CD4-positive, alpha-beta memory T cell (primary cell): ENCODE measurements at regions of chr15 and their contacts with region 1.

Region 1: GRCh38 chr15:45587095-45587860 is at the start of gene BLOC1S6:
- DNase-seq: peak; percentile 87 to 91 (median 90)
- H3K4me3 ChIP-seq: peak within 1 kb of the TSS; percentile 89 to 99
- H3K4me3 Mint-ChIP-seq: peak within 1 kb of the TSS; percentile 96 to 100 (median 100)
- H3K27ac ChIP-seq: peak within 1 kb of the TSS; percentile 95
- H3K27ac Mint-ChIP-seq: peak within 1 kb of the TSS; percentile 100
- H3K4me1 ChIP-seq: peaks cover 44% of the 10 kb centered on the region
- H3K4me1 Mint-ChIP-seq: peaks cover 20 to 48% (median 37%) of the 10 kb centered on the region in 4 donors
- H3K27me3 ChIP-seq: no peaks in the 10 kb centered on the region
- H3K27me3 Mint-ChIP-seq: no peaks in the 10 kb centered on the region
- total RNA-seq, gene BLOC1S6: 43.0 to 43.9 TPM

Region 2: GRCh38 chr15:45522328-45523160 is 64.7 kb before region 1 on chr15 and contains the start of gene SLC30A4:
- CTCF ChIA-PET with region 1: interaction called, 3 read pairs
- POLR2A ChIA-PET with region 1: interaction called, 11 read pairs
- intact Hi-C with region 1: loop called (anchors 1 kb)
- DNase-seq: peak; percentile 68 to 75 (median 69)
- H3K4me3 ChIP-seq: peak within 1 kb of the TSS; percentile 62 to 82
- H3K4me3 Mint-ChIP-seq: peak within 1 kb of the TSS; percentile 87 to 96 (median 94)
- H3K27ac ChIP-seq: peak within 1 kb of the TSS; percentile 54
- H3K27ac Mint-ChIP-seq: peak within 1 kb of the TSS; percentile 36 to 93 (median 88)
- H3K4me1 ChIP-seq: peaks cover 15% of the 10 kb centered on the region
- H3K4me1 Mint-ChIP-seq: peaks cover 18 to 28% (median 21%) of the 10 kb centered on the region in 4 donors
- H3K27me3 ChIP-seq: no peaks in the 10 kb centered on the region
- H3K27me3 Mint-ChIP-seq: no peaks in the 10 kb centered on the region
- total RNA-seq, gene SLC30A4: 3.6 to 3.8 TPM

Region 3: DNA sequence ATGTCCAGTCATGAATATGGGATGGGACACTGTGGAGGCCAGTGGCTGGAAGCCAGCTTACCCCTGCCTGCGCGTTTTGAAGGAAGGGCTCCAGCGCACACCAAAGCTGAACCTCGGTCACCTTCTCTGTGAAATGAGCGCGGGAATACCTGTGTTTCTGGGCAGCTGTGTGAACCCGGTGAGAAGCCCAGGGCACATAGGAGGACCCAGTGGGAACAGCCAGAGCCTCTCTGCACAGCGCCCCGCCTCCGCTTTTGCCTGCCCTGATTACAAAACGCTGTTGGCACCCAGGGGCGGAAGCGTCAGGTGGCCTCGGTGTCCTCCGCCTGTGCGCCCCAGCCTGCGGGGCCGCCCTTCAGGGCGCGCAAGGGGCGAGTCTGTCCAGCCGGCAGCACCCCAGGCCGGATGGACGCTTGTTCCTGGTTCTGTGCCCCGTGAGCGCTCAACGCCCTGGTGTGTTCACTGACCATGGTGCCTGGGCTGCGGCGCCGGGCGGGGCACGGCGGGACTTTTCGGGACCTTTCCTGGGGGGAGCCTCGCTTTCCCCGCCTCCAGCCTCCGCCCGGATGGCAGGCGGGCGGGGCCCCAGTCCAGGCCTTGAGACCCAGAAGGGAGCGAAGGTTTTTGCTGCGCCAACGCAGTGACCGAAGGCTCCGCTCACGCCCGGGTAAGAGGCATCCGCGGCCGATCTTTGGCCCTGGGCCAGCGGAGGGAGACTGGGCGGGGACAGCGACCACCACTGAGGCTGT is 47.3 kb after region 1 on chr15 and contains the start of gene SQOR:
- CTCF ChIA-PET with region 1: interaction called, 6 read pairs
- POLR2A ChIA-PET with region 1: interaction called, 39 read pairs
- intact Hi-C with region 1: loop called (anchors 1 kb)
- DNase-seq: peak; percentile 63 to 71 (median 67)
- H3K4me3 ChIP-seq: peak within 1 kb of the TSS; percentile 76 to 90
- H3K4me3 Mint-ChIP-seq: peak within 1 kb of the TSS; percentile 88 to 99 (median 98)
- H3K27ac ChIP-seq: peak within 1 kb of the TSS; percentile 67
- H3K27ac Mint-ChIP-seq: peak within 1 kb of the TSS; percentile 90 to 96 (median 95)
- H3K4me1 ChIP-seq: peaks cover 45% of the 10 kb centered on the region
- H3K4me1 Mint-ChIP-seq: peaks cover 26 to 53% (median 41%) of the 10 kb centered on the region in 4 donors
- H3K27me3 ChIP-seq: no peaks in the 10 kb centered on the region
- H3K27me3 Mint-ChIP-seq: no peaks in the 10 kb centered on the region
- total RNA-seq, gene SQOR: 47.9 to 51.0 TPM

Region 4: GRCh38 chr15:45690581-45691260 is 103.4 kb after region 1 on chr15:
- CTCF ChIA-PET with region 1: no interaction called
- POLR2A ChIA-PET with region 1: no interaction called
- intact Hi-C with region 1: no loop called
- DNase-seq: no peak
- H3K4me3 ChIP-seq: no peak overlapping the region
- H3K4me3 Mint-ChIP-seq: no peak overlapping the region
- H3K27ac ChIP-seq: no peak overlapping the region
- H3K27ac Mint-ChIP-seq: no peak overlapping the region
- H3K4me1 ChIP-seq: no peaks in the 10 kb centered on the region
- H3K4me1 Mint-ChIP-seq: peaks cover 0 to 2% (median 0%) of the 10 kb centered on the region in 4 donors
- H3K27me3 ChIP-seq: no peaks in the 10 kb centered on the region
- H3K27me3 Mint-ChIP-seq: no peaks in the 10 kb centered on the region